Mucosa of descending colon (tissue), 3 donors: ENCODE measurements at regions of chr2 and their contacts with region 1.

Region 1: GRCh38 chr2:27703638-27704341 is 40.1 kb downstream of the SLC4A1AP start:
- DNase-seq: peak in 2 of 3 donors; percentile 80 to 94
- ATAC-seq: peak; percentile 74
- H3K4me3 ChIP-seq: no peak overlapping the region
- H3K4me1 ChIP-seq: peaks cover 16% of the 10 kb centered on the region
- CTCF ChIP-seq: peak; percentile 72

Region 2: DNA sequence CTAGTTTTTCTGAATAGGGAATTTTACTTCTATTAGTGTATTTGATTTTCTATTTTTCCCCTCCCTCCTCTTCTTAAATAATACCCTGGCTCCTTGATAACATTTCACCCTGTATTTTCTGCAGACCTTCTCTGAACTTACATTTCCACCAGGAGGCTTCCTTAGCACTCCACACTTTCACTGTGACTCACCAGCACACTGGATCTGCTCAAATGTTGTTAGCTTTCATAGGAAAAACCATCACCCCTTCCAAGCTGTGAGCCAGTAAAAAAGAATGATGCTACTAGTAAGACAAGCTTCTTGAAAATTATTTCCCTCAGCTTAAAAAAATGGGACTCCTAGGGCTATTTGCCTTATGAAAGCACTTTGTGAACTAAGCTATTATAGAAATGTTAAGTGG is 56.5 kb before region 1 on chr2:
- intact Hi-C with region 1: no loop called
- DNase-seq: no peak
- ATAC-seq: no peak
- H3K4me3 ChIP-seq: no peak overlapping the region
- H3K4me1 ChIP-seq: no peaks in the 10 kb centered on the region
- CTCF ChIP-seq: no peak

Region 3: GRCh38 chr2:28239207-28239606 is 535.4 kb after region 1 on chr2:
- intact Hi-C with region 1: loop called in 1 of 2 experiments (anchors 5 kb)
- DNase-seq: no peak
- ATAC-seq: no peak
- H3K4me3 ChIP-seq: no peak overlapping the region
- H3K4me1 ChIP-seq: peaks cover 6% of the 10 kb centered on the region
- CTCF ChIP-seq: no peak

Region 4: GRCh38 chr2:28452534-28453081 is 748.8 kb after region 1 on chr2:
- intact Hi-C with region 1: loop called in 1 of 2 experiments (anchors 10 kb)
- DNase-seq: peak; percentile 79 to 91 (median 86)
- ATAC-seq: peak; percentile 91
- H3K4me3 ChIP-seq: no peak overlapping the region
- H3K4me1 ChIP-seq: no peaks in the 10 kb centered on the region
- CTCF ChIP-seq: peak; percentile 96